Activated naive CD4-positive, alpha-beta T cell treated with anti-CD3 and anti-CD28 coated beads for 36 hours (primary cell): ENCODE measurements at regions of chr9 and their contacts with region 1.

Region 1: DNA sequence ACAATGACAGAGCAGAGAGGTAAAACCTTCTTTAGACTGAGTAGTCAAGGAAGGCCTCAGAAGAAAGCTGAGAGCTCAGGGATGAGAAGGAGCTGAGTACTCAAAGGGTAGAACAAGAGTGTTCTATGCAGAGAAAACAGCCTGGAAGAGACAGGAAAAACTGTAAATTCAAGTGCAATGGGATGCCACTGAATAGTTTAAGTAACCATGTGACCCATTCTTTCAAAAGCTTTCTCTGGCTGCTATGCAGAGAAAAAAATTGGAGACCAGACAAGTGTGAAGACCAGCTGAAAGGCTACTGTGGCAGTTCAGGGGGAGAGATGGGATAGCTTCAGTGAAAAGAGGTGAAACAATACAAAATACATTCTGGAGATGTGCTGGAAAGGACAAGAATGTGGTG is 61.3 kb upstream of the RNF38 start:
- DNase-seq: no peak
- H3K4me3 Mint-ChIP-seq: no peak overlapping the region
- H3K27ac Mint-ChIP-seq: no peak overlapping the region
- H3K4me1 Mint-ChIP-seq: peaks cover 46% of the 10 kb centered on the region
- H3K27me3 Mint-ChIP-seq: no peaks in the 10 kb centered on the region

Region 2: DNA sequence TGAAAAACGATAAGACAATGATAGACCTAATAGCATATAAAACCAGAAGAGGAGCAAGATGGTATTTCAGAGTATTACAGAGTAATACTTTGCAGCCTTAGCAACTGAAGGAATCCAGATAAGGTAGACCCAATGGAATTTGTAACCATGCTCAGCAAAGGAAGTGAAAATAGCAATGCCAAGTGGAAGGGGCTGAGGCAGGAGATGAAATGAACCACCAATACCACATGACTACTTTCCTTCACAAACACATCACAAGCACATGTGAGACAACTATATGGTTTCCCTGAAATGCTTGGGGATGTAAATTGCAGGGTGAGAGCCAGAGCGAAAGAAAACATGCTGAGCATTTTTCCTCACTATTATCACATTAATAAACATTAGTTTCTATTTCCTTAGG is 31.5 kb after region 1 on chr9:
- CTCF ChIA-PET with region 1: no interaction called
- intact Hi-C with region 1: loop called (anchors 1 kb)
- DNase-seq: peak; percentile 44
- H3K4me3 Mint-ChIP-seq: peak overlapping the region; percentile 49
- H3K27ac Mint-ChIP-seq: peak overlapping the region; percentile 81
- H3K4me1 Mint-ChIP-seq: peaks cover 63% of the 10 kb centered on the region
- H3K27me3 Mint-ChIP-seq: no peaks in the 10 kb centered on the region

Region 3: GRCh38 chr9:36717276-36717675 is 256.0 kb after region 1 on chr9:
- CTCF ChIA-PET with region 1: no interaction called
- intact Hi-C with region 1: no loop called
- DNase-seq: no peak
- H3K4me3 Mint-ChIP-seq: no peak overlapping the region
- H3K27ac Mint-ChIP-seq: no peak overlapping the region
- H3K4me1 Mint-ChIP-seq: no peaks in the 10 kb centered on the region
- H3K27me3 Mint-ChIP-seq: peaks cover 3% of the 10 kb centered on the region